GM10248 (cell line): ENCODE measurements at regions of chr6 and their contacts with region 1.

Region 1: GRCh38 chr6:29676981-29677601 is 3.9 kb downstream of the ZFP57 start:
- DNase-seq: no peak
- CTCF ChIP-seq: no peak

Region 2: GRCh38 chr6:29665942-29666825 is 10.9 kb before region 1 on chr6:
- CTCF ChIA-PET with region 1: interaction called, 13 read pairs
- POLR2A ChIA-PET with region 1: no interaction called
- DNase-seq: peak; percentile 43
- CTCF ChIP-seq: no peak

Region 3: GRCh38 chr6:29694637-29695036 is 17.5 kb after region 1 on chr6:
- CTCF ChIA-PET with region 1: no interaction called
- POLR2A ChIA-PET with region 1: no interaction called
- DNase-seq: no peak
- CTCF ChIP-seq: no peak

Region 4: DNA sequence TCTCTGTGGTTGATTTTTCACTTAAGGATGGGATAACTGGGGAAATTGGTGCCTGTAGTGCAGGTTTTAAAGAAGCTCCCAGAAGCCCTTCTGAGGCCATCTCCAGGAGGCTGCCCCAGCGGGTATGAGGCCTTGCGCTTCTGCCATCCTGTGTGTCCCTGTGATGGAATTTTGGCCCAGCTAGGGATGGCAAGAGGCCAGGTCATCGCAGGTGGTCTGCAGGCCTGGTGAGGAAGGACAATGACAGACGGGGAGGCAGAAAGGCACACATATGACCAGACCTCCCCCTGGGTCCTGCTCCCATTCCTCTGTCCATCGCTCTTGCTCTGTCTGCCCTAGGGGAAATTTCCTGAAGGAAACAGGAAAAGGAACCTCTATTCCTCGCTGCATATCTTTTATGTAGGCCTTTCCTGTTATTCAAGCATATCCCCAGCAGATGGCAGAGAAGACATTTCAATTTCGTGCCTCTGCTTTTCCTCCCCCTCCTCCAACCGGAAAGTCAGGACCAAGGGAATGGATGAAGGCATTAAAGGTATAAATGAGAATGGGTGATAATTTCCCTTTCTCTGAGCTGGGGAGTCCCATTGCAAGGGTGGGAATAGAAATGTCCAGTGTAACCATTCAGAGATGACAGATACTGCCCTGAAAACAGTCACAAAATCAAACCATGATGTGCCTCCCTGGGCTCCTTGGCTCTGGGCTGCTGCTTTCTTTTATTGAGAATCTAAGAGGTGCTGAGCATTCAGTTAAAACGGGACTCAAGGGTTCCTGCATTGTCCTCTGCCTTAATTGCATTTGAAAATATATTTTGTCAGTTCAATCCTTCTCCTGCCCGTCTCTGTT is 28.5 kb after region 1 on chr6:
- CTCF ChIA-PET with region 1: no interaction called
- POLR2A ChIA-PET with region 1: no interaction called
- DNase-seq: no peak
- CTCF ChIP-seq: peak; percentile 52

Region 5: DNA sequence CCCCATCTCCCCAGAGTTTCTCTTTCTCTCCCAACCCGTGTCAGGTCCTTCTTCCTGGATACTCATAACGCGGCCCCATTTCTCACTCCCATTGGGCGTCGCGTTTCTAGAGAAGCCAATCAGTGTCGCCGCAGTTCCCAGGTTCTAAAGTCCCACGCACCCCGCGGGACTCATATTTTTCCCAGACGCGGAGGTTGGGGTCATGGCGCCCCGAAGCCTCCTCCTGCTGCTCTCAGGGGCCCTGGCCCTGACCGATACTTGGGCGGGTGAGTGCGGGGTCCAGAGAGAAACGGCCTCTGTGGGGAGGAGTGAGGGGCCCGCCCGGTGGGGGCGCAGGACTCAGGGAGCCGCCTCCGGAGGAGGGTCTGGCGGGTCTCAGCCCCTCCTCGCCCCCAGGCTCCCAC is 46.2 kb after region 1 on chr6 and contains the start of gene HLA-F:
- CTCF ChIA-PET with region 1: no interaction called
- POLR2A ChIA-PET with region 1: no interaction called
- DNase-seq: peak; percentile 93
- CTCF ChIP-seq: no peak

Region 6: GRCh38 chr6:29809249-29809648 is 132.2 kb after region 1 on chr6:
- CTCF ChIA-PET with region 1: no interaction called
- POLR2A ChIA-PET with region 1: no interaction called
- DNase-seq: no peak
- CTCF ChIP-seq: no peak